ENCODE measurements at regions of chr1 and their contacts with region 1.

Region 1: DNA sequence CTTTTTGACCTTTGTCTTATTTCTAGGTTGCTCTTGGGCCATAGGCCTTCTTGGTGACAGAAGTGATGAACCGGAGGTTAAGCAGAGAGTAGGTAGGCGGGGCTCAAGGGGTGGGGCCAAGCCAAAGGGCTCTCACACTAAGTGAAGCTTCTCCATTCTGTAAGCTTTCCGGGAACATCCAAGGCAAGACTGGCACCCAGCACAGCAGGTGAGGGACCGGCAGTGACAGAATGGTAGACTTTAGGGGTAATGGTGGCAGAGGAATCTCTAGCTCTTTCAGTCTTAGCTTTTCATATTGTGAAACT is at the start of gene TNFAIP8L2:
- DNase-seq: peak; percentile 45 to 86 (median 74)
- ATAC-seq: peak; percentile 83
- H3K4me3 ChIP-seq: peak within 1 kb of the TSS; percentile 83 to 89
- H3K4me3 Mint-ChIP-seq: peak within 1 kb of the TSS; percentile 97
- H3K27ac ChIP-seq: peak within 1 kb of the TSS; percentile 55 to 70
- H3K27ac Mint-ChIP-seq: peak within 1 kb of the TSS; percentile 92
- H3K4me1 ChIP-seq: peaks cover 35% of the 10 kb centered on the region
- H3K4me1 Mint-ChIP-seq: peaks cover 55% of the 10 kb centered on the region
- H3K27me3 ChIP-seq: no peaks in the 10 kb centered on the region
- H3K27me3 Mint-ChIP-seq: no peaks in the 10 kb centered on the region
- CTCF ChIP-seq: no peak
- total RNA-seq, gene TNFAIP8L2: 0.62 to 0.86 TPM

Region 2: DNA sequence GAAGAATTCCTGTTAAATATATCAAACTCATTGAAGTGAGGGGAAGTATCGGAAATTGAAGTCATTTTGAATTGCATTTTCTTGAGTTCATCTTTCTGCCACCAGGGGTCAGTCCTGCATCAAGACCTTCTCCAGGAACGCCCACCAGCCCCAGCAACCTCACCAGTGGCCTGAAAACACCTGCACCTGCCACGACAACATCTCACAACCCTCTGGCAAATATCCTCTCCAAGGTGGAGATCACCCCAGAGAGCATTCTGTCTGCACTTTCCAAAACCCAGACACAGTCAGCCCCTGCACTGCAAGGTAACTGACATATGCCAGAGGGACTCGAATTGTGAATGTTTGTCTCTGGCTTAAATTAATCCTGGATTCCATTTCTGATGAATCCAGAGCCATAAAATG is 692.0 kb before region 1 on chr1:
- CTCF ChIA-PET with region 1: no interaction called
- POLR2A ChIA-PET with region 1: no interaction called
- intact Hi-C with region 1: loop called in 1 of 2 experiments (anchors 5 kb)
- DNase-seq: peak; percentile 46 to 82 (median 73)
- ATAC-seq: peak; percentile 96
- H3K4me3 ChIP-seq: no peak overlapping the region
- H3K4me3 Mint-ChIP-seq: no peak overlapping the region
- H3K27ac ChIP-seq: no peak overlapping the region
- H3K27ac Mint-ChIP-seq: peak overlapping the region; percentile 33
- H3K4me1 ChIP-seq: no peaks in the 10 kb centered on the region
- H3K4me1 Mint-ChIP-seq: peaks cover 4% of the 10 kb centered on the region
- H3K27me3 ChIP-seq: no peaks in the 10 kb centered on the region
- H3K27me3 Mint-ChIP-seq: no peaks in the 10 kb centered on the region
- CTCF ChIP-seq: peak; percentile 78

Region 3: DNA sequence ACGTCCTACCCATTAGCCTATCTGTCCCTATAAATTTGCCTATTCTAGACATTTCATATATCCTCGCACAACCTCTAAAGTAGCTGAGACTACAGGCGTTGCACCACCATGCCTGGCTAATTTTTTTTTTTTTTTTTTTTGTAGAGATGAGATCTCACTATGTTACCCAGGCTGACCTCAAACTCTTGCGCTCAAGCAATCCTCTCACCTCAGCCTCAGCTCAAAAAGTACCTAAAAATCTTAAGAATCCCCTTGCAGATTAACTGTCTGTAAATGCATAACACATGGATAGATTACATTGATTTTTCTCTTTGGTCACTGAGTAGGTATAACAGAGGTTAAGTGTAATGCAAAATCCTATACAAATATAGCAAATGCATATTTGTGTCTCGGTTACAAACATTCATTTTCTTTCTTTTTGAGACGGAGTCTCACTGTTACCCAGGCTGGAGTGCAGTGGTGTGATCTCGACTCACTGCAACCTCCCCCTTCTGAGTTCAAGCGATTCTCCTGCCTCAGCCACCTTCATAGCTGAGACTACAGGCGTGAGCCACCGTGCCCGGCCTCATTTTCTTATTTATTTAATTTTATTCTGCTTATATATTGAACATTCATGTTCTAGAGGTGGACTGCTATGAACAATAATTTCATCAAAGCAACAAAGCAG is 438.1 kb before region 1 on chr1:
- CTCF ChIA-PET with region 1: no interaction called
- POLR2A ChIA-PET with region 1: no interaction called
- intact Hi-C with region 1: no loop called
- DNase-seq: peak in 2 of 9 experiments; percentile 22 to 46
- ATAC-seq: no peak
- H3K4me3 ChIP-seq: no peak overlapping the region
- H3K4me3 Mint-ChIP-seq: no peak overlapping the region
- H3K27ac ChIP-seq: no peak overlapping the region
- H3K27ac Mint-ChIP-seq: no peak overlapping the region
- H3K4me1 ChIP-seq: no peaks in the 10 kb centered on the region
- H3K4me1 Mint-ChIP-seq: no peaks in the 10 kb centered on the region
- H3K27me3 ChIP-seq: no peaks in the 10 kb centered on the region
- H3K27me3 Mint-ChIP-seq: peaks cover 3% of the 10 kb centered on the region
- CTCF ChIP-seq: no peak

Region 4: GRCh38 chr1:150979092-150980056 is 177.1 kb before region 1 on chr1:
- CTCF ChIA-PET with region 1: interaction called, 4 read pairs
- POLR2A ChIA-PET with region 1: no interaction called
- intact Hi-C with region 1: loop called (anchors 1 to 5 kb)
- DNase-seq: peak; percentile 83 to 93 (median 90)
- ATAC-seq: peak; percentile 62
- H3K4me3 ChIP-seq: peak overlapping the region; percentile 22 to 32
- H3K4me3 Mint-ChIP-seq: peak overlapping the region; percentile 57
- H3K27ac ChIP-seq: peak overlapping the region in 1 of 2 experiments; percentile 47
- H3K27ac Mint-ChIP-seq: peak overlapping the region; percentile 3
- H3K4me1 ChIP-seq: peaks cover 41% of the 10 kb centered on the region
- H3K4me1 Mint-ChIP-seq: peaks cover 38% of the 10 kb centered on the region
- H3K27me3 ChIP-seq: no peaks in the 10 kb centered on the region
- H3K27me3 Mint-ChIP-seq: no peaks in the 10 kb centered on the region
- CTCF ChIP-seq: peak; percentile 100

Region 5: GRCh38 chr1:151070474-151071276 is 85.8 kb before region 1 on chr1 and contains the start of gene GABPB2:
- CTCF ChIA-PET with region 1: interaction called, 15 read pairs
- POLR2A ChIA-PET with region 1: interaction called, 3 read pairs
- intact Hi-C with region 1: no loop called
- DNase-seq: peak; percentile 69 to 96 (median 86)
- ATAC-seq: peak; percentile 81
- H3K4me3 ChIP-seq: peak within 1 kb of the TSS; percentile 78 to 97
- H3K4me3 Mint-ChIP-seq: peak within 1 kb of the TSS; percentile 99
- H3K27ac ChIP-seq: peak within 1 kb of the TSS; percentile 89 to 90
- H3K27ac Mint-ChIP-seq: peak within 1 kb of the TSS; percentile 100
- H3K4me1 ChIP-seq: peaks cover 11% of the 10 kb centered on the region
- H3K4me1 Mint-ChIP-seq: peaks cover 29% of the 10 kb centered on the region
- H3K27me3 ChIP-seq: no peaks in the 10 kb centered on the region
- H3K27me3 Mint-ChIP-seq: no peaks in the 10 kb centered on the region
- CTCF ChIP-seq: peak; percentile 91
- total RNA-seq, gene GABPB2: 20.0 to 21.9 TPM

Region 6: GRCh38 chr1:151098126-151098525 is 58.3 kb before region 1 on chr1:
- CTCF ChIA-PET with region 1: interaction called, 204 read pairs
- POLR2A ChIA-PET with region 1: interaction called, 26 read pairs
- intact Hi-C with region 1: loop called (anchors 1 kb)
- DNase-seq: no peak
- ATAC-seq: no peak
- H3K4me3 ChIP-seq: no peak overlapping the region
- H3K4me3 Mint-ChIP-seq: no peak overlapping the region
- H3K27ac ChIP-seq: no peak overlapping the region
- H3K27ac Mint-ChIP-seq: no peak overlapping the region
- H3K4me1 ChIP-seq: no peaks in the 10 kb centered on the region
- H3K4me1 Mint-ChIP-seq: no peaks in the 10 kb centered on the region
- H3K27me3 ChIP-seq: no peaks in the 10 kb centered on the region
- H3K27me3 Mint-ChIP-seq: no peaks in the 10 kb centered on the region
- CTCF ChIP-seq: no peak

Region 7: GRCh38 chr1:151130987-151131586 is 25.4 kb before region 1 on chr1:
- CTCF ChIA-PET with region 1: interaction called, 22 read pairs
- POLR2A ChIA-PET with region 1: interaction called, 20 read pairs
- intact Hi-C with region 1: loop called in 1 of 2 experiments (anchors 2 kb)
- DNase-seq: peak; percentile 61 to 92 (median 80)
- ATAC-seq: peak; percentile 100
- H3K4me3 ChIP-seq: peak overlapping the region; percentile 40 to 51
- H3K4me3 Mint-ChIP-seq: peak overlapping the region; percentile 82
- H3K27ac ChIP-seq: peak overlapping the region in 1 of 2 experiments; percentile 41
- H3K27ac Mint-ChIP-seq: peak overlapping the region; percentile 90
- H3K4me1 ChIP-seq: peaks cover 10% of the 10 kb centered on the region
- H3K4me1 Mint-ChIP-seq: peaks cover 12% of the 10 kb centered on the region
- H3K27me3 ChIP-seq: no peaks in the 10 kb centered on the region
- H3K27me3 Mint-ChIP-seq: no peaks in the 10 kb centered on the region
- CTCF ChIP-seq: no peak

Region 8: GRCh38 chr1:151189638-151190445 is 33.4 kb after region 1 on chr1 and contains the start of gene VPS72:
- CTCF ChIA-PET with region 1: interaction called, 6 read pairs
- POLR2A ChIA-PET with region 1: interaction called, 13 read pairs
- intact Hi-C with region 1: no loop called
- DNase-seq: peak; percentile 58 to 94 (median 85)
- ATAC-seq: peak; percentile 91
- H3K4me3 ChIP-seq: peak within 1 kb of the TSS; percentile 78 to 89
- H3K4me3 Mint-ChIP-seq: peak within 1 kb of the TSS; percentile 100
- H3K27ac ChIP-seq: peak within 1 kb of the TSS; percentile 69 to 81
- H3K27ac Mint-ChIP-seq: peak within 1 kb of the TSS; percentile 99
- H3K4me1 ChIP-seq: peaks cover 18% of the 10 kb centered on the region
- H3K4me1 Mint-ChIP-seq: peaks cover 37% of the 10 kb centered on the region
- H3K27me3 ChIP-seq: no peaks in the 10 kb centered on the region
- H3K27me3 Mint-ChIP-seq: no peaks in the 10 kb centered on the region
- CTCF ChIP-seq: no peak
- total RNA-seq, gene VPS72: 7.0 to 12.1 TPM